Aorta (tissue), 5 donors: ENCODE measurements at regions of chr4 and their contacts with region 1.

Region 1: GRCh38 chr4:54322818-54323417 is 93.8 kb downstream of the PDGFRA start:
- DNase-seq: peak in 1 of 2 donors; percentile 63
- ATAC-seq: peak; percentile 60
- H3K4me3 ChIP-seq: no peak overlapping the region
- H3K27ac ChIP-seq: no peak overlapping the region
- H3K4me1 ChIP-seq: no peaks in the 10 kb centered on the region
- H3K27me3 ChIP-seq: no peaks in the 10 kb centered on the region

Region 2: DNA sequence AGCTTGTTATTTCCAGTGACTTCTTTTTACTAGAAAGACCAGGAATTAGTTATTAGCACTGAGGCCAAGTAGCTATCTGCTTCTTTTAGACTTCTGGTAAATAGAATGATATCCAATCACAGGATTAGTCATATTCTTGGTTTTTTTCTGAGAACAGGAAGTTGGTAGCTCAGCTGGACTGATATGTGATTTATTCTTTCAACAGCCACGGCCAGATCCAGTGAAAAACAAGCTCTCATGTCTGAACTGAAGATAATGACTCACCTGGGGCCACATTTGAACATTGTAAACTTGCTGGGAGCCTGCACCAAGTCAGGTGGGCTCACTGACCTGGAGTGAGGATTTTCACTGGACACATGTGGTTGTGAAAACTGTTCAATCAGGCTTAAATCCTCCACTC is 45.2 kb before region 1 on chr4:
- intact Hi-C with region 1: no loop called
- DNase-seq: no peak
- ATAC-seq: peak; percentile 15
- H3K4me3 ChIP-seq: no peak overlapping the region
- H3K27ac ChIP-seq: peak overlapping the region in 1 of 2 donors; percentile 91
- H3K4me1 ChIP-seq: peaks cover 6 to 14% of the 10 kb centered on the region in 2 donors
- H3K27me3 ChIP-seq: no peaks in the 10 kb centered on the region

Region 3: DNA sequence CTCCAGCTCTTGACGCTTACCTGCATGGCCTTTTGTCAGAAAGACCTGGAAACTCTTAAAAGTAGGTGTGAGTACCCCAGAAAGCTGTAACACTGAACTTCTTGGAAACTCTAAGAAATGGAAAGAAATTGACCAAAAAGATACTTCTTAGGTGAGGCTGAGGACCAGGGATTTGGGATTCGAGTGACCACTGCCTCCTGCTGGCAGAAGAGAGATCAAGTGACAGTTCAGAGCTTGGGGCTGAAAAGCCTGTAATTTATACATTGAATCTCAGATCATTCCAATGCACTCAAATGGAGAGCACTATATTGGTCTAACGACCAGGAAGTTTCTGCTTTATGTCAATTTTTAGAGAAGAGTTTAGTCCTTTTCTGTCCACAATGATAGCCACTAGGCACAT is 110.8 kb after region 1 on chr4:
- intact Hi-C with region 1: loop called in 1 of 2 experiments (anchors 2 kb)
- DNase-seq: no peak
- ATAC-seq: no peak
- H3K4me3 ChIP-seq: no peak overlapping the region
- H3K27ac ChIP-seq: no peak overlapping the region
- H3K4me1 ChIP-seq: no peaks in the 10 kb centered on the region
- H3K27me3 ChIP-seq: no peaks in the 10 kb centered on the region

Region 4: GRCh38 chr4:54440394-54441136 is 117.6 kb after region 1 on chr4:
- intact Hi-C with region 1: loop called (anchors 2 to 5 kb)
- DNase-seq: no peak
- ATAC-seq: no peak
- H3K4me3 ChIP-seq: peak overlapping the region in 1 of 2 donors; percentile 26
- H3K27ac ChIP-seq: no peak overlapping the region
- H3K4me1 ChIP-seq: peaks cover 0 to 1% of the 10 kb centered on the region in 2 donors
- H3K27me3 ChIP-seq: no peaks in the 10 kb centered on the region

Region 5: GRCh38 chr4:54840992-54841768 is 518.3 kb after region 1 on chr4:
- intact Hi-C with region 1: loop called (anchors 5 kb)
- DNase-seq: no peak
- ATAC-seq: no peak
- H3K4me3 ChIP-seq: no peak overlapping the region
- H3K27ac ChIP-seq: no peak overlapping the region
- H3K4me1 ChIP-seq: no peaks in the 10 kb centered on the region
- H3K27me3 ChIP-seq: no peaks in the 10 kb centered on the region

Region 6: DNA sequence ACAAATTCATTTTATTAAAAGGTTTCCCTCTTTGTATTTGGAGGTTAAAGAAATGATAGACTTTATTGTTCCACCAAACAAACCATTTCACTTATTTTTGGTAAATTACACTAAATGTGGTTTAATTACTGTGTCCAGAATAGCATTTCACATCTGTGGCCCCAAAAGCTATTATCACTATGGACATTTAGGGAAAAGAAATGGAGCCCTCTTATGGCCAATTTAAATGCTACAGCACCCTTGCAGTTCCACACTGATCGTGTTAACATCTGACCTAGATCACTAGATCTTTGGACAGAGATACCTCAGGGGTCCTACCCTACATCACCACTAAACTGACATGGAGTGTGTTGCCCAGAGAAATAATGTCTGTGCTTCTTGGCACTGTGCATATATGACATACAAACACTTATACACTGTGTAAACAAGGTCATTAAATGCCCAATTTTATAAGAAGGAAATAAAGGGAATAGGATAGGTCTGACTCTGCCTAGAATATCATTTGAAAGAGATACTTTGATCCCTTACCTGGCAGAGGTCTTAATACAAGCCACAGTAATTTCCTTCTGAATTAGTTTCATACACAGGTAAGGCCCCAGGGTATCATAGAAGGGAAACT is 638.5 kb after region 1 on chr4:
- intact Hi-C with region 1: loop called (anchors 10 kb)
- DNase-seq: no peak
- ATAC-seq: no peak
- H3K4me3 ChIP-seq: no peak overlapping the region
- H3K27ac ChIP-seq: no peak overlapping the region
- H3K4me1 ChIP-seq: no peaks in the 10 kb centered on the region
- H3K27me3 ChIP-seq: no peaks in the 10 kb centered on the region